ENCODE measurements at regions of chr21 and their contacts with region 1.

Region 1: GRCh38 chr21:45470773-45471524 is 66.0 kb downstream of the COL18A1 start:
- DNase-seq: no peak
- ATAC-seq: no peak
- H3K4me3 ChIP-seq: peak overlapping the region in 2 of 3 experiments; percentile 34 to 63; a peak in 4 of 6 replicates
- H3K27ac ChIP-seq: peak overlapping the region; percentile 99
- H3K4me1 ChIP-seq: peaks cover 75% of the 10 kb centered on the region
- H3K27me3 ChIP-seq: no peaks in the 10 kb centered on the region
- CTCF ChIP-seq: no peak
- EP300 ChIP-seq: no peak
- POLR2A ChIP-seq: no peak
- RAD21 ChIP-seq: no peak

Region 2: GRCh38 chr21:45330075-45330781 is 140.7 kb before region 1 on chr21:
- CTCF ChIA-PET with region 1: no interaction called
- POLR2A ChIA-PET with region 1: interaction called, 17 read pairs
- in situ Hi-C with region 1: no loop called
- intact Hi-C with region 1: no loop called
- DNase-seq: peak; percentile 89
- ATAC-seq: peak; percentile 85
- H3K4me3 ChIP-seq: peak overlapping the region; percentile 25 to 72 (median 56); a peak in 5 of 6 replicates
- H3K27ac ChIP-seq: peak overlapping the region; percentile 72
- H3K4me1 ChIP-seq: peaks cover 79% of the 10 kb centered on the region
- H3K27me3 ChIP-seq: no peaks in the 10 kb centered on the region
- CTCF ChIP-seq: no peak
- EP300 ChIP-seq: peak in 1 of 2 experiments; percentile 70; a peak in 2 of 4 replicates
- POLR2A ChIP-seq: no peak; a peak in 1 of 4 replicates
- RAD21 ChIP-seq: peak; percentile 29; the same call in 1 of the 2 replicates

Region 3: DNA sequence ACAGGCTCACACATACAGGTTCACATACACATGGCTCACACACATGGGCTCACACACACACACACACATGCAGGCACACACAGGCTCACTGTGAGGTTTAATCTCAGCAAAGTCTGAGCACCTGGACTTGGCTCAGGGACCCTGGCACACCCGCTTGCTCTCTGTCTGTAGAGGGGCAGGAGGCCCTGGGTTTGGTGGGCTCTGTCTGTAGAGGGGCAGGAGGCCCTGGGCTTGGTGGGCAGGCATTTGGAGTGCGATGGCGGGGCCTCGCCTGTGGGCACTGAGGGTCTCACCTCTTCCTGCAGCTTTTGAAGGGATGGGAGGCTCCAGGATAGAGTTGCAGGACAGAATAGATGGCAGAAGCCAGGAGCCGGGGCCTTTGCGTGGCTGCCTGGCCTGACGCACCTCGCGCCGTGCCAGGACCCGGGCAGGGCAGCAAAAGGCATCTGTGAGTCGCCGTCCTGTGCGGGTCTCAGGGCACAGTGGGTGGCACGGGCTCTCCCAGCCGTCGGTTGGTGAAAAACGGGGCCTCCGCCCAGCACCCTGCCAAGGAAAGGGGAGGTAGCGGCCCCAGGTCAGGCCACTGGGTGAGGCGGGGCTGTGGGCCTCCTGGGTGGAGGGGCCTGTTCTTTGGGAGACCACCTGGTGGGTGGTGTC is 48.7 kb before region 1 on chr21:
- CTCF ChIA-PET with region 1: no interaction called
- POLR2A ChIA-PET with region 1: interaction called, 22 read pairs
- in situ Hi-C with region 1: no loop called
- intact Hi-C with region 1: no loop called
- DNase-seq: no peak
- ATAC-seq: no peak
- H3K4me3 ChIP-seq: no peak overlapping the region
- H3K27ac ChIP-seq: no peak overlapping the region
- H3K4me1 ChIP-seq: peaks cover 77% of the 10 kb centered on the region
- H3K27me3 ChIP-seq: no peaks in the 10 kb centered on the region
- CTCF ChIP-seq: no peak
- EP300 ChIP-seq: no peak
- POLR2A ChIP-seq: no peak
- RAD21 ChIP-seq: no peak

Region 4: GRCh38 chr21:45454060-45454925 is 16.7 kb before region 1 on chr21:
- CTCF ChIA-PET with region 1: no interaction called
- POLR2A ChIA-PET with region 1: interaction called, 41 read pairs
- in situ Hi-C with region 1: no loop called
- intact Hi-C with region 1: loop called (anchors 1 kb)
- DNase-seq: no peak
- ATAC-seq: peak; percentile 11
- H3K4me3 ChIP-seq: no peak overlapping the region
- H3K27ac ChIP-seq: peak overlapping the region; percentile 38
- H3K4me1 ChIP-seq: peaks cover 69% of the 10 kb centered on the region
- H3K27me3 ChIP-seq: no peaks in the 10 kb centered on the region
- CTCF ChIP-seq: peak; percentile 35
- EP300 ChIP-seq: no peak
- POLR2A ChIP-seq: no peak
- RAD21 ChIP-seq: no peak

Region 5: GRCh38 chr21:45482899-45483821 is 12.2 kb after region 1 on chr21:
- CTCF ChIA-PET with region 1: no interaction called
- POLR2A ChIA-PET with region 1: interaction called, 13 read pairs
- in situ Hi-C with region 1: no loop called
- intact Hi-C with region 1: no loop called
- DNase-seq: no peak
- ATAC-seq: no peak
- H3K4me3 ChIP-seq: no peak overlapping the region
- H3K27ac ChIP-seq: no peak overlapping the region
- H3K4me1 ChIP-seq: no peaks in the 10 kb centered on the region; the same call in 1 of the 2 replicates
- H3K27me3 ChIP-seq: no peaks in the 10 kb centered on the region
- CTCF ChIP-seq: no peak
- EP300 ChIP-seq: no peak
- POLR2A ChIP-seq: 0 out of 4 replicates have a peak, but pooled peaks of 1 of the 2 experiments have one; percentile 6
- RAD21 ChIP-seq: no peak